ENCODE measurements at regions of chr13 and their contacts with region 1.

Region 1: GRCh38 chr13:76886292-76887075 is at the start of gene KCTD12:
- DNase-seq: peak; percentile 84 to 93 (median 88)
- H3K4me3 ChIP-seq: peak within 1 kb of the TSS; percentile 35 to 81 (median 73)
- H3K27ac ChIP-seq: no peak within 1 kb of the TSS
- H3K4me1 ChIP-seq: peaks cover 6 to 33% (median 27%) of the 10 kb centered on the region in 4 experiments
- H3K27me3 ChIP-seq: peaks cover 0 to 9% (median 4%) of the 10 kb centered on the region in 5 experiments

Region 2: DNA sequence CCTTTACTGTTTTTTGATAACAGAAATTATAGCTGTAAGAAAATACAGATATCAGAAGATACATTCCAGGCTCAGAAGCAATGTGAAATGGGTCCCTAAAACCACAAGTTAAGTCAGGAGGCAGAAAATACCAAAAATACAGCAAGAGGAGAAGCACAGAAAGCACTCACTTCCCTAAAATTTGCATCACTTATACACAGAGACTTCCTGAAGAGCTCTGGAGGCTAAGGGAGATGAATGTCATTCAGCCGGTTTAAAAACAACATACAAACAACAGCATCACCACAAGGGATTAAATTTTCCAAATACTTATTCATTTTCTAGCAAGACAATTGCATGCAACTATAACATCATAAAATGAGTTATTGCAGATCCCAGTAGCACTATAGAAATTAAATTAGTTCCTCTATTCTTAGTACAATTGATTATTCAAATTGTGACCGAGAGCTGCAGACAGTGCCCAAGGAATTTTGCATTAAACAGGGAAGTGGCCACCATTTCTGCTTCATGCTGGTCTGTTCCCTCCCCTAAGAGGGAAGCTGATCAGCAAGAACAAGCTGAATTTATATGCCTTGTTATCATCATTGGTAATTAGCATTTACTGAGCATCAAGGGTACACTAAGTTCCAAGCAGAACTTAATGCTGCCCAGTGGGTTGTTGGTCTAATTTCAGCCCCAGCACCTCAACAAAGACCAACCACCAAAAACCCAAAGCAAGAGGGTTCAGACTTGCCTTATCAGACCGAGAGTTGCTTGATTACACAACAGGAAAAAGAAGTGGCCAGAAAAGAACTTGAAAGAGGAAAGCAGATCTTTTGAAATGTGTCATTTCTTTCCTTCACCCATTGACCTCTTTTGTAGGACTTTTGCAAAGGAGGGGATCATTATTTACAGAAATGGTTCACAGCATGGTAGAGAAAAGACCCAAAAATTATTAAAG is 141.0 kb before region 1 on chr13:
- CTCF ChIA-PET with region 1: no interaction called
- POLR2A ChIA-PET with region 1: no interaction called
- DNase-seq: peak; percentile 38 to 81 (median 69)
- H3K4me3 ChIP-seq: peak overlapping the region in 3 of 7 experiments; percentile 4 to 37 (median 14)
- H3K27ac ChIP-seq: peak overlapping the region in 1 of 2 experiments; percentile 25
- H3K4me1 ChIP-seq: peaks cover 7 to 29% (median 16%) of the 10 kb centered on the region in 4 experiments
- H3K27me3 ChIP-seq: no peaks in the 10 kb centered on the region

Region 3: DNA sequence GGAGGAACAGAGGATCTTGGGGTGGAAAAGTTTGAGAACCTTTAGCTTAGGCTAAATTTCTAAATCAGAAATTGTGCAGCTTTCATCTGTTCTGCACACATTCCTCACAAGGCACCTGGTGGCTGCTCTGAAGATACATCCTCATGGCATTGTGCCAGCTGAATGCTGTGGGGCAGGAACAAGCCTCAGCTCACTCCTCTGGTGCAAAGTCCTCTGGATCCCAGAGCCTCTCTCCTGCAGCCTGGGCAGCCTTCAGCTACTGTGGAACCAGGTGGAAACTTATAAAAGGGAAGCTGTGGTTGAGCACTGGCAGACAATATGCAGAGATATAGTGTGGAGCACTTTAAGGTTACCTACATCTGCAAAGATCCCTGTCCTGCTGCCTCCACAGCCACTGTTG is 72.6 kb before region 1 on chr13:
- CTCF ChIA-PET with region 1: interaction called, 15 read pairs
- POLR2A ChIA-PET with region 1: interaction called, 3 read pairs
- DNase-seq: peak in 2 of 3 donors; percentile 80 to 86
- H3K4me3 ChIP-seq: no peak overlapping the region
- H3K27ac ChIP-seq: no peak overlapping the region
- H3K4me1 ChIP-seq: peaks cover 2 to 23% (median 17%) of the 10 kb centered on the region in 4 experiments
- H3K27me3 ChIP-seq: no peaks in the 10 kb centered on the region

Region 4: DNA sequence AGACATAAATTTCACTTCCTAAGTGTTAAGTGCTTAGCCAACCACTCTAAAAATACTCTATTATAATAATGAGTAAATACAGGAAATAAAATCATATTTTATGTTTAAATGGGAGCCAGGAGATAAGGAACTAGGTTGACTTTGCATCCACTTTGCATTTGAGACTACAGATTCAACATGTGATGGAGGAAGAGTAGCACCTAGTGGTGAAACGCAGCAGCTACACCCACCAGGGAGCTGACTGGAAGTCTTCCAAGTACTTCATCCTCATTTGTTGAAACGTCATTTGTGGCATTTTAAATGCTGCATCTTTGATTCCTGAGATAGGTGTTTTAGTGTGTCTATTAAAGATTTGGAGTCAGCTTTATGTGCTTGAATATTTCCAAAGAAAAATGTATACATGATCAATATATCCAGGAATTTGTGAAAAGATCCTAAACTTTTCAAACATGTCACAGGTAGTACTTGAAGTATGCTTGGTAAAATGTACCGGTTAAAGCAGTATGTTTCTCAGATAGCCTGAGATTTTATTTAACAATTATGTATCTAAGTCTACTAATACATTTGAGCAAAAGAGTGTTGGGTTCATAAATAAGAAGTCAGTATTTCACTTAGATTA is 17.2 kb after region 1 on chr13:
- CTCF ChIA-PET with region 1: interaction called, 11 read pairs
- POLR2A ChIA-PET with region 1: no interaction called
- DNase-seq: peak; percentile 81 to 90 (median 87)
- H3K4me3 ChIP-seq: no peak overlapping the region
- H3K27ac ChIP-seq: no peak overlapping the region
- H3K4me1 ChIP-seq: no peaks in the 10 kb centered on the region
- H3K27me3 ChIP-seq: peaks cover 0 to 2% (median 0%) of the 10 kb centered on the region in 5 experiments

Measured in common myeloid progenitor, CD34-positive (primary cell).